HepG2 (cell line): ENCODE measurements at regions of chr20 and their contacts with region 1.

Region 1: DNA sequence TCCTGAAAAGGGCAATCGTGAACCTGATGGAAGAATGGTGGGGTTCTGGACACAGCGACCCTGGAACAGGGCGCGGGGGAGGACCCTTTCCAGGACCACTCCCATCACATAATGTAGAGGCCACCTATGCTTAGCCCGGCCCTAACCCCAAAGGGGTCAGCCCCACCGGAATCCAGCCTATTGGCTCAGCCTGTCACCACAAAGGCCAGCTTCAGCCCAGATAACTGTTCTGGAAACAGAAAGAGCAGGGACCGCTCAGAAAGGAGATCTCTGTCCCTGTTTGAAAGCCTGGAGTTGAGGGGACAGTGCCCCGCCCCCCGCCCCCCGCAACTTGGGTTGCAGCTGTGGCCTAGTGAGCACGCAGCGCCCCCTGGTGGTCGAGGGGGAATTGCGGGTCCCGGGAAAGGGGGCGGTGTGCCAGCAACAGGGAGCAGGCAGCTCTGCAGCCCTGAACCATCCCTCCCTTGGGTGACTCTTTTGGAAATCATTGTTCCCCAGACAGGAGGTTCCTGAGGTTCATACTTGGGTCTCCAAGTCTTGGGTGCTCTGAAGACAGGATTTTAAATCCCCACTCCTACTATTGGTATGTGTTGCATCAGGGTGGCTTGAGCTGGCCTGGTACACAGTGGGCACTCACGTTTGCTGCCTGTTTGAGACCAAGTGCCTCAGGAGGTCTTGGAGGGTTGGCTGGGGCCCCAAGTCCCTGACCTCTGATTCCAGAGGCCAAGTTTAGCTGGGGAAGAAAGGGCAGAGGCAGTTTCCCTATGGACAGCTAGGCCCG is 1.5 kb downstream of the SIGLEC1 start:
- DNase-seq: peak; percentile 46
- ATAC-seq: peak; percentile 76
- H3K4me3 ChIP-seq: no peak overlapping the region
- H3K27ac ChIP-seq: no peak overlapping the region
- H3K4me1 ChIP-seq: no peaks in the 10 kb centered on the region
- H3K27me3 ChIP-seq: peaks cover 9 to 41% of the 10 kb centered on the region in 2 experiments
- CTCF ChIP-seq: peak; percentile 98
- EP300 ChIP-seq: no peak
- POLR2A ChIP-seq: no peak
- RAD21 ChIP-seq: peak; percentile 92

Region 2: GRCh38 chr20:2873010-2873746 is 837.7 kb before region 1 on chr20 and contains the start of gene PTPRA:
- CTCF ChIA-PET with region 1: no interaction called
- POLR2A ChIA-PET with region 1: no interaction called
- in situ Hi-C with region 1: no loop called
- intact Hi-C with region 1: no loop called
- DNase-seq: peak; percentile 91
- ATAC-seq: peak; percentile 90
- H3K4me3 ChIP-seq: peak within 1 kb of the TSS; percentile 77 to 98 (median 92)
- H3K27ac ChIP-seq: peak within 1 kb of the TSS; percentile 49
- H3K4me1 ChIP-seq: peaks cover 63% of the 10 kb centered on the region
- H3K27me3 ChIP-seq: peaks cover 0 to 18% of the 10 kb centered on the region in 2 experiments; a peak in 3 of 5 replicates
- CTCF ChIP-seq: no peak
- EP300 ChIP-seq: no peak
- POLR2A ChIP-seq: peak; percentile 94 to 95
- RAD21 ChIP-seq: peak; percentile 58; the same call in 1 of the 2 replicates
- total RNA-seq, gene PTPRA: 43.7 and 47.2 TPM in 2 replicates

Region 3: GRCh38 chr20:3646651-3647050 is 64.2 kb before region 1 on chr20:
- CTCF ChIA-PET with region 1: no interaction called
- POLR2A ChIA-PET with region 1: no interaction called
- in situ Hi-C with region 1: no loop called
- intact Hi-C with region 1: no loop called
- DNase-seq: no peak
- ATAC-seq: no peak
- H3K4me3 ChIP-seq: no peak overlapping the region
- H3K27ac ChIP-seq: no peak overlapping the region
- H3K4me1 ChIP-seq: no peaks in the 10 kb centered on the region
- H3K27me3 ChIP-seq: no peaks in the 10 kb centered on the region
- CTCF ChIP-seq: no peak
- EP300 ChIP-seq: no peak
- POLR2A ChIP-seq: no peak
- RAD21 ChIP-seq: no peak

Region 4: GRCh38 chr20:3679749-3680700 is 30.9 kb before region 1 on chr20:
- CTCF ChIA-PET with region 1: interaction called, 65 read pairs
- POLR2A ChIA-PET with region 1: interaction called, 3 read pairs
- in situ Hi-C with region 1: loop called (anchors 5 kb)
- intact Hi-C with region 1: loop called (anchors 1 kb)
- DNase-seq: no peak
- ATAC-seq: peak; percentile 2; the same call in 2 of the 3 replicates
- H3K4me3 ChIP-seq: no peak overlapping the region
- H3K27ac ChIP-seq: no peak overlapping the region
- H3K4me1 ChIP-seq: 0 out of 2 replicates have a peak, but pooled peaks cover 9% of the 10 kb centered on the region
- H3K27me3 ChIP-seq: peaks cover 43 to 81% of the 10 kb centered on the region in 2 experiments
- CTCF ChIP-seq: no peak
- EP300 ChIP-seq: no peak
- POLR2A ChIP-seq: no peak
- RAD21 ChIP-seq: no peak